Heart left ventricle (tissue), 16 donors: ENCODE measurements at regions of chr20 and their contacts with region 1.

Region 1: DNA sequence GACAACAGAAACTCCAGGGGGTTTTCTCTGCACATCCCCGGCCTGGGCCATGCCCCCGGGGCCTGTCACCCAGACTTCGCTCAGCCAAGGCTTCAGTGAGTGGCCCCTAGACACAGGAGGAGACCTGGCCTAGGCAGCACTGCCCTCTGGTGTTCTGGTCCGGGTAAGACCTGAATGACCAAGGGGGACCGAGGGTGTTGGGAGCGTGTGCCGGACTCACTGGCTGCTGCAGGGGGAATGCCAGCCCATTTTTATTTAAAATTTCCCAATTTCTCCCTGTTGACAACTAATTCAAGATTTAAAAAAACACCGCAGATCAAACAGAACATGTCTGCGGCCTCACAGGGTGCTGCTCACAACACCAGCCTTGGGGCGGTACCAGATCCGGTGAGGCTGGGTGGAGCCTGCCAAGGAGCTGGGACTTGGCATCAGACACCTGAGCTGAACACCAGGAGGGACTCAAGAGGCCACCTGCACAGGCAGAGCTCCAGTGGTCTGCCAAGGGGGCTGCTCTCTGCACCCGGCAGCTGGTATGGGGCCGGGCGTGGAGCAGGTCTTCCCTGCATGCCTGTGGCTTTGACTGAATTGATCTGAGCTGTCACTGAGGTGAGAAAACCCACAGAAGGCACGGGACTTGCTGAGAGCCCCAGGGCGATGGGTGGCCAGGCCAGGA is 47.8 kb downstream of the DSTN start:
- DNase-seq: peak in 3 of 5 donors; percentile 66 to 73 (median 67)
- ATAC-seq: peak; percentile 45 to 63 (median 49)
- H3K4me3 ChIP-seq: no peak overlapping the region
- H3K27ac ChIP-seq: peak overlapping the region in 1 of 12 donors; percentile 4
- H3K4me1 ChIP-seq: peaks cover 0 to 49% (median 24%) of the 10 kb centered on the region in 12 donors
- H3K27me3 ChIP-seq: no peaks in the 10 kb centered on the region
- CTCF ChIP-seq: peak; percentile 57 to 88 (median 74)
- POLR2A ChIP-seq: no peak

Region 2: GRCh38 chr20:17536944-17537444 is 80.7 kb before region 1 on chr20:
- intact Hi-C with region 1: loop called (anchors 1 to 2 kb)
- DNase-seq: peak in 4 of 5 donors; percentile 54 to 75 (median 69)
- ATAC-seq: peak; percentile 93 to 99 (median 98)
- H3K4me3 ChIP-seq: no peak overlapping the region
- H3K27ac ChIP-seq: peak overlapping the region in 2 of 12 donors; percentile 7 to 64
- H3K4me1 ChIP-seq: peaks cover 0 to 11% (median 0%) of the 10 kb centered on the region in 12 donors
- H3K27me3 ChIP-seq: no peaks in the 10 kb centered on the region
- CTCF ChIP-seq: peak; percentile 72 to 93 (median 88)
- POLR2A ChIP-seq: no peak

Region 3: DNA sequence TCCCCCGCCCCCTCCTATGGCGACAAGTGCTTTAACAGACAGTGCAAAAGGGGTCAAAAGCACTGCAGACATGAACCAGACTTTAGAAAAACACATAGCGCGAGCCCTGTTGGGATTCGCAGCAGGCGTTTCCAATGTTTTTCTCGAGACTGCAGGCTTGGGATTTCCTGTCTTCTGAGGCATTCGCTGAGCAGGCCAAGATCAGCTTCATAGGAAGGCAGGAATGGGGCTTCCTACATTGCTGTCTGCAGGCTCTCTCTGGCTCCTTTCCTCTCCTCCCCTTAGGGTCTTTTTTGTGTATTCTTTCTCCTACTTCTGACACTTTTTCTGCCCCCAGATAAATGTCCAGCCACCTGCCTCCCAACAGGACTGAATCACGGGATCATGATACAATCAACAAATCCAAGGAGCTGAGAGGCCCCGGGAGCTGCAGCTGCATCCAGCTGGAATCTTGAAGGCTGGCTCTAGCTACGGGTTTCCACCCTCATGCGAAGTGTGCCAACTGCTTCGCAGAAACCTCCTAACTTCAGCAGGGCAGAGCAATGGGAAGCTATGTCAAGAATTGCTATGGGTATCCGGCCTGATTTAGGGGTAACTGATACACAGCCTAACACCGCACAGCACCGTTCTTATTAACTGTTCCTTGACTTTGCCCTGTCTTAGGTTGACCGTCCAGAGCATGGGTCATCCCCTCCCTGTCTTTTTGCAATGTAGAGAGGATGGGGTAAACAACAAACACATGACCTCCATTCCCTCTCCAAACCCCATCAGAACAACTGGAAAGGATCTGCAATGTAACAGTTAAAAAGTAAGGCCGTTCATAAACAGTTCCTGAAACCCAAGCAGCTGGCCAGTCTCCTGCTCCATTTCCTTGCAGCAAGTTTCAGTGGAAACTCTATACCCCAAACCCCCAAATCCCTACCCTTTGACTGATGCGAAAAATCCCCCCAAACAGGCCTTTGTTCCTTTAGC is 319.4 kb after region 1 on chr20:
- intact Hi-C with region 1: no loop called
- DNase-seq: peak in 4 of 5 donors; percentile 60 to 81 (median 71)
- ATAC-seq: peak; percentile 52 to 72 (median 66)
- H3K4me3 ChIP-seq: no peak overlapping the region
- H3K27ac ChIP-seq: peak overlapping the region; percentile 14 to 74 (median 32)
- H3K4me1 ChIP-seq: peaks cover 0 to 59% (median 24%) of the 10 kb centered on the region in 12 donors
- H3K27me3 ChIP-seq: no peaks in the 10 kb centered on the region
- CTCF ChIP-seq: no peak
- POLR2A ChIP-seq: no peak